Activated naive CD4-positive, alpha-beta T cell treated with anti-CD3 and anti-CD28 coated beads for 36 hours (primary cell): ENCODE measurements at regions of chr9 and their contacts with region 1.

Region 1: GRCh38 chr9:33778700-33779351 is 16.5 kb upstream of the PRSS3 start:
- DNase-seq: peak; percentile 70
- H3K4me3 Mint-ChIP-seq: no peak overlapping the region
- H3K27ac Mint-ChIP-seq: no peak overlapping the region
- H3K4me1 Mint-ChIP-seq: peaks cover 2% of the 10 kb centered on the region
- H3K27me3 Mint-ChIP-seq: no peaks in the 10 kb centered on the region

Region 2: DNA sequence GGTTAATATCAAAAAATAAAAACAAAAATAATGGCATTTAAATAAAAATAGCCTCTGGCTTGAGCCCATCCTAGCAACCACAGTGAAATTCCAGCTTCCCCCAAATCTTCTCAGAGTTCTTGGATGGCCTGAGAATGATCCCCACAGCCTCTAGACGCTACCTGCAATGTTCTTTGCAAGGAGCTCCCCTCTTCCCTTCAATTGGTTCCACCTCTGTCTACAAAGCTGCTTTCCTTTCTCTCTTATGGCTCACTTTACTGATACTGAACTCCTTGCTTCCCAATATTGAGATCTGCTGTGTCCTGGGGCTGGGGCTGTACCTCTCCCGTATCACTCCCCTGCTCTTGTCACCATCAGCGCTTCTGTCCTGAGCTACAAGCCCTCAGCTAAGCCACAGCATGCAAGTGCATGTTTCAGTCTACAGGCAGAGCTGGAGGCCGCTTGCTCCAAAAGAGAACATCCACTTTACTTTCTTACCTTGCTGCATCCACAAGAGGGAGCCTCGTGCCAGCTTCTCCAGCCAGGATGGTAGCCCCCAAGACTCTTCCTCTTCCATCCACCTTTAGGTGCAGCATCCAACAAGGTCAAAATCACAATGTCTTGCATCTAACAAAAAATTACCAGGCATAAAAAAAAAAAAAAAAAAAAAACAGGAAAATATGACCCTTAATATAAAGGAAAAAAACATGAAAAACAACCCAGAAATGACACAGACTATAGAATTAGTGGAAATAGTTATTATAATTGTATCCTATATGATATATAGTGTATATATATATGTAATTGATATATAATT is 40.8 kb before region 1 on chr9:
- CTCF ChIA-PET with region 1: interaction called, 11 read pairs
- intact Hi-C with region 1: loop called (anchors 1 kb)
- DNase-seq: peak; percentile 27
- H3K4me3 Mint-ChIP-seq: no peak overlapping the region
- H3K27ac Mint-ChIP-seq: no peak overlapping the region
- H3K4me1 Mint-ChIP-seq: no peaks in the 10 kb centered on the region
- H3K27me3 Mint-ChIP-seq: peaks cover 20% of the 10 kb centered on the region

Region 3: DNA sequence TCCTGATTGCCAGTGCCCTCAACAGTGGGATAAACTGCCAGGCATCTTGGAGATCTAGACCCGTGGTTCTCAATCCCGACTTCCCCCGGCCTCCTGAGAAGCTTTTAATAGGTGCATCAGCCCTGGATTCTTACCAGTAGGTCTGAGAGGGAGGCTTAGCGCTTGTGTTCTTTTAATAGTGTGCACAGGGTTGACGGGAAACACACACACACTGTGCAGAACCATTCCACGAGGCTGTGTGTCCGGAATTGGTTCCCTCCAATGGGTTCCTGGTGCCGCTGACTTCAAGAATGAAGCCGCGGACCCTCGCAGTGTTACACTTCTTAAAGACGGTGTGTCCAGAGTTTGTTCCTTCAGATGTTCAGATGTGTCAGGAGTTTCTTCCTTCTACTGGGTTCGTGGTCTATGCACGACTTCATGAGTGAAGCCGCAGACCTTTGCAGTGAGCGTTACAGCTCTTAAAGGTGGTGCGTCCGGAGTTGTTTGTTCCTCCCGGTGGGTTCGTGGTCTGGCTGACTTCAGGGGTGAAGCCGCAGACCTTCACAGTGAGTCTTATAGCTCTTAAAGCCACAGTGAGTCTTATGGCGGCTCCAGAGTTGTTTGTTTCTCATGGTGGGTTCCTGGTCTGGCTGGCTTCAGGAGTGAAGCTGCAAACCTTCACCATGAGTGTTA is 30.1 kb before region 1 on chr9:
- CTCF ChIA-PET with region 1: interaction called, 10 read pairs
- intact Hi-C with region 1: no loop called
- DNase-seq: peak; percentile 14
- H3K4me3 Mint-ChIP-seq: peak overlapping the region; percentile 68
- H3K27ac Mint-ChIP-seq: no peak overlapping the region
- H3K4me1 Mint-ChIP-seq: peaks cover 25% of the 10 kb centered on the region
- H3K27me3 Mint-ChIP-seq: peaks cover 72% of the 10 kb centered on the region

Region 4: DNA sequence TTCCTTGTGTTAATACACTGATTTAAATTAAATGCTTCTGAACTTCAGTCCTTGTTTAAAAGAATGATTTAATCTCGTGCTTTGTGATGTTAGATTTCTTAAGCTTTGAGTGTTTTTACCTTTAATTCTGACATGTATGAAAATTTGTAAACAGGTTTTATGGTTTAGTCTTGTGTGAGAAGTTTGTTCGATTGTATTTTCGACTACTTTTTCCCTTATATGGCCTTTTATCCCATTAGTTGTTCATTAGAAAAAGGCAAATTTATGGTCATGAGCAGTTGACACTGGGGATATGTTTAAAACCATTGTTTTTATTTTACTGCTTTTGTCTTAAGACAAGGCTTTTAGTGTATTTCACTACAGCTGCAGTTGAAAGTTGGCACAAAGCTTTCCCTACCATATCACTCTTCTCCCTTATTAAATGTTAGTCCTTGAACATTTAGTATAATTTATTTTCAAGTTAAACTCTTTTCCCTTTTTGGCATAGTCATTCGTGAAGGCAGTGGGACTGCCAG is 41.5 kb after region 1 on chr9:
- CTCF ChIA-PET with region 1: no interaction called
- intact Hi-C with region 1: no loop called
- DNase-seq: no peak
- H3K4me3 Mint-ChIP-seq: peak overlapping the region; percentile 56
- H3K27ac Mint-ChIP-seq: no peak overlapping the region
- H3K4me1 Mint-ChIP-seq: peaks cover 44% of the 10 kb centered on the region
- H3K27me3 Mint-ChIP-seq: no peaks in the 10 kb centered on the region

Region 5: GRCh38 chr9:33988219-33988890 is 209.5 kb after region 1 on chr9:
- CTCF ChIA-PET with region 1: no interaction called
- intact Hi-C with region 1: no loop called
- DNase-seq: peak; percentile 50
- H3K4me3 Mint-ChIP-seq: no peak overlapping the region
- H3K27ac Mint-ChIP-seq: peak overlapping the region; percentile 15
- H3K4me1 Mint-ChIP-seq: peaks cover 14% of the 10 kb centered on the region
- H3K27me3 Mint-ChIP-seq: no peaks in the 10 kb centered on the region